Activated T-helper 2 cell treated with anti-CD3 and anti-CD28 coated beads, Interferon-gamma antibody, Interleukin-2, Interleukin-4, amounts not matched to agents 10 μg/mL and 5 μg/mL and 100 μg/mL, durations not matched to agents 14 hours and 24 hours and 36 hours (primary cell): ENCODE measurements at regions of chr3 and their contacts with region 1.

Region 1: GRCh38 chr3:170221924-170222646 is at the start of gene PRKCI:
- DNase-seq: peak; percentile 84
- H3K4me3 Mint-ChIP-seq: peak within 1 kb of the TSS; percentile 87
- H3K27ac Mint-ChIP-seq: peak within 1 kb of the TSS; percentile 89
- H3K4me1 Mint-ChIP-seq: peaks cover 22% of the 10 kb centered on the region
- H3K27me3 Mint-ChIP-seq: peaks cover 4% of the 10 kb centered on the region
- total RNA-seq, gene PRKCI: 24.7 and 32.4 TPM in 2 replicates

Region 2: DNA sequence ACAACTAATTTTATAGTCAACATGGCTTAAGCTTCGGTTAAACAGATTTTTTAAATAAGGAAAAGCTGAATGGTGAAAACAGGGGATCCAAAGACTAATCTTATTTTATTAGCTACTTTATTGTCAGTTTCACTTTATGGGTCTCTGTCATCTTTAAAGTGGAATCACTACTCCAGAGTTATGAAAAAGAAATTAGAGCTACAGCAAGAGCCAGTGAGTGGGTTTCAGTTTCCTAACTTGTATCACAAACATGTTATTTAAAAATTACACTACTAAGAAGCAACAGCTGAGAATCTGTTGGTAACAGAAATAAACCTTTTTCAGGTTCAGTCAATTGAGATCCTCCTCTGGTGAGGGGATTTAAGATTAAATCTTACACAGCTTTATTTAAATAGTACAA is 50.5 kb before region 1 on chr3:
- intact Hi-C with region 1: no loop called
- DNase-seq: no peak
- H3K4me3 Mint-ChIP-seq: peak overlapping the region; percentile 33
- H3K27ac Mint-ChIP-seq: peak overlapping the region; percentile 67
- H3K4me1 Mint-ChIP-seq: peaks cover 38% of the 10 kb centered on the region
- H3K27me3 Mint-ChIP-seq: no peaks in the 10 kb centered on the region

Region 3: DNA sequence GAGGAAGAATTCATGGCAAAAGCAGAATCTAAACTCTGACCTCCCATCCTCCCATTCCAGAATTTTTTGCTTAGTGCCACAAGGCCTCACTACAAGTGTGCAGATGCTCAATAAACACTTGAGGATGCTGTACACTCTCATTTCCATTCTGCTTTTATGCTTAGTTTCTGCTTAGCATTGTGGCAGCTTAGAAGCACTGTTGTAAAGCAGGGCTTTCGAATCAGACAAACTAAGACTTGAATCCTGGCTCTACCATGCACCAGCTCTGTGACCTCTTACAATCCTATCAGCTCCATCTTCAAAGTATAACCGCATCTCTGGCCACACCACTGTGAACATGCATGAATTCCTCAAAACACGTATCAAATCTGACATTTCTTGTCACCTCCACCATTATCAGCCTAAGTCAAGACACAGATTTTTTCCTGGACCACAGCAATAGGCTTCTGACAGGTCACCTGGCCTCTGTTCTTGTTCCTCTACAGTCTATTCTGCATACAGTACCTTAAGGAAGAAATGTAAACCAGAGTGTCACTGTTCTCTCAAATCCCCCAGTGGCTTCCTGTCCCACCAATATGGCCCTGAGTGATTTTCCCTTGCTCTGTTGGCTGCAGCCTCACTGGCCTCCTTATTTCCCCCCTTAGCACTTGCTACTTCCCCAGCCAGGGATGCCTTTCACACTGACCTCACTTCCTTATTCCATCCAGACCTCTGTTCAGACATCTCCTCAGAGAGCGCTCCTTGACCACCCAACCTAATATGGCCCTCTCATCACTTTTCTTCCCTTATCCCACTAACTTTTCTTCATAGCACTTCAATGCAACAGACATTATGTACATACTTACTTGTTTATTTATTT is 32.5 kb before region 1 on chr3:
- intact Hi-C with region 1: loop called (anchors 2 kb)
- DNase-seq: no peak
- H3K4me3 Mint-ChIP-seq: no peak overlapping the region
- H3K27ac Mint-ChIP-seq: no peak overlapping the region
- H3K4me1 Mint-ChIP-seq: peaks cover 6% of the 10 kb centered on the region
- H3K27me3 Mint-ChIP-seq: peaks cover 9% of the 10 kb centered on the region

Region 4: GRCh38 chr3:170205302-170205701 is 16.8 kb before region 1 on chr3:
- intact Hi-C with region 1: no loop called
- DNase-seq: no peak
- H3K4me3 Mint-ChIP-seq: no peak overlapping the region
- H3K27ac Mint-ChIP-seq: no peak overlapping the region
- H3K4me1 Mint-ChIP-seq: no peaks in the 10 kb centered on the region
- H3K27me3 Mint-ChIP-seq: peaks cover 13% of the 10 kb centered on the region

Region 5: DNA sequence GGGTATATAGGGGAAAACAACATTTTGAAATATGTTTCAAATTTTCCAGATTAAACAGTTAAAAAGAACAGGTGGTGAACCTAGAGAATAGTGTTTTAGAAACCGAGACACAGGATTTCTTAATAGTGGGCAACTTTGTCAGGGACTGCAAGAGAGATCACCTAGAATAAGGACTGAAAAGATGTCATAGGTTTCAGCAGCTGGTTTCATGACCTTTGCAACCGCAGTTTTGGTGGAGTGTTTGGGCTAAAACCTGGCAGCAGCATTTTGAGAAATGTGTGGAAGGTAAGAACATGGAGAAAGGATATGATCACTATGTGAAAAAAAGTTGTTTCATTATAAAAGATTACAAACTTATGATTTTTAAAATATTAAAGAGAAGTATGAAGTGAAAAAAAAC is 35.1 kb after region 1 on chr3:
- intact Hi-C with region 1: loop called (anchors 1 kb)
- DNase-seq: no peak
- H3K4me3 Mint-ChIP-seq: no peak overlapping the region
- H3K27ac Mint-ChIP-seq: peak overlapping the region; percentile 54
- H3K4me1 Mint-ChIP-seq: peaks cover 37% of the 10 kb centered on the region
- H3K27me3 Mint-ChIP-seq: no peaks in the 10 kb centered on the region

Region 6: DNA sequence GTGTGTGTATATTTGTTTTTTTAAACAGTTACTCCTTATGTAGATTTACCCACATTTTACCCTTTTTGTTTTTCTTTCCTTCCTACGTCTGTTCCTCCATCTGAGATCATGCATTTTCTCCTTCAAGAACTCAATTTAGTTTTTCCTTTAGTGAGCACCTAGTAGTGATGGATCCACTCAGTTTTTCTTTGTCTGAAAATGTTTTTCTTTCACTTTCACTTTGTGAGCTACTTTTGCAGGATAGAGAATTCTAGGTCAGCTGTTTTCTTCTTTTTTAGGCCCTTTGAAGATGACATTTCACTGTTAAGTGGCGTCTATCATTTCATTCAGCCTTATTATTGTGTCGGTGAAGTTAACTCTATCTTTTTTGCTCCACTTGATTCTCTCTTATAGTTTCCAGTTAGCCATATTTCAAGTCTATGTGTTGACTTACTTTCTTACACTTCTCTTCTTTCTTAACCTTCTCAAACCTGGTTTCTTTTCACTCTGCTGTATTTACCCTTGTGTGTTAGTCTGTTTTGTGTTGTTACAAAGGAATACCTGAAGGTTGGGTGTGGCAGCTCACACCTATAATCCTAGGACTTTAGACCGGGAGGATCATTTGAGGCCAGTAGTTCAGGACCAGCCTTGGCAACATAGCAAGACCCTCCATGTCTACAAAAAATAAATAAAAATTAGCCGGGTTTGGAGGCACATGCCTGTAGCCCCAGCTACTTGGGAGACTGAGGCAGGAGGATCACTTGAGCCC is 55.9 kb after region 1 on chr3:
- intact Hi-C with region 1: loop called (anchors 1 kb)
- DNase-seq: no peak
- H3K4me3 Mint-ChIP-seq: peak overlapping the region; percentile 68
- H3K27ac Mint-ChIP-seq: peak overlapping the region; percentile 68
- H3K4me1 Mint-ChIP-seq: peaks cover 26% of the 10 kb centered on the region
- H3K27me3 Mint-ChIP-seq: no peaks in the 10 kb centered on the region

Region 7: DNA sequence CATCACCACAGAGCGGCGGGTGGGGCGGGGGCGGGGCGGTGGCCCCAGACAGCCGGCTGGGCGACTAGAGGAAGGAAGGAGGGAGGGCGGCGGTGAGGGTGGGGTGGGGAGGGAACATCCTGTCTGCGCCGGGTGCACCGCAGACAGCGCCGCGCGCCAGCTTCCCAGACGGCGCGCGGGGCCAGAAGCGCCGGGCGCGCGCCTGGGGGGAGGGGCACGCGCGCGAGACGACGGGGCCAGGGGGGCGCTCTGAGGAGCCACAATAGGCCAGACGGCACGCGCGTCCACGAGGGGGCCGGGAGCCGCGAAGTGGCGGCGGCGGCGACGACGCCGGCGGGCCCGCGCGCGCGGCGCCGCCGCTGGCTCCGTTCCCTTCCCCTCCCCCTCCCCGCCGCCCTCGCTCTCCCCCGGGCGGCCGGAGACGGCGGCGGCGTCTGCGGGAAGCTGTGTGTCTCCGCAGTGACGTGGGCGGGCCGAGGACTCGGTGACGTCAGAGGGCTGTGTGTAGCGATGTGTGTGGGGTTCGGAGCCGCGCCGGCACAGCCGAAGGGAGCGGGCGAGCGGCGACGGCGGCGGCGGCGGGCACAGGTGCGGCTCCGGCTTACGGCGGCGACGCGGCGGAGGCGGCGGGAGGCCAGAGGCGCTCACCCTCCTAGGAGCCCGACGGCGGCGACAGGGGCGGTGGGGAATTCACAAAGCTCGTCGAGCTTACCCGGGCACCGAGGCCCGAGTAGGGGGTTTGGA is 135.3 kb after region 1 on chr3 and contains the start of gene SKIL:
- intact Hi-C with region 1: loop called (anchors 1 kb)
- DNase-seq: peak; percentile 93
- H3K4me3 Mint-ChIP-seq: peak within 1 kb of the TSS; percentile 95
- H3K27ac Mint-ChIP-seq: peak within 1 kb of the TSS; percentile 97
- H3K4me1 Mint-ChIP-seq: peaks cover 30% of the 10 kb centered on the region
- H3K27me3 Mint-ChIP-seq: peaks cover 8% of the 10 kb centered on the region
- total RNA-seq, gene SKIL: 31.2 and 33.2 TPM in 2 replicates

Region 8: GRCh38 chr3:170483485-170484262 is 261.6 kb after region 1 on chr3:
- intact Hi-C with region 1: no loop called
- DNase-seq: no peak
- H3K4me3 Mint-ChIP-seq: no peak overlapping the region
- H3K27ac Mint-ChIP-seq: no peak overlapping the region
- H3K4me1 Mint-ChIP-seq: no peaks in the 10 kb centered on the region
- H3K27me3 Mint-ChIP-seq: peaks cover 13% of the 10 kb centered on the region